B cell (primary cell): ENCODE measurements at regions of chr5 and their contacts with region 1.

Region 1: GRCh38 chr5:148740966-148741742 is 85.3 kb upstream of the ADRB2 start:
- DNase-seq: peak; percentile 72
- ATAC-seq: peak; percentile 28
- H3K4me3 ChIP-seq: no peak overlapping the region
- H3K4me3 Mint-ChIP-seq: no peak overlapping the region
- H3K27ac ChIP-seq: no peak overlapping the region
- H3K27ac Mint-ChIP-seq: no peak overlapping the region
- H3K4me1 ChIP-seq: peaks cover 0 to 3% of the 10 kb centered on the region in 2 donors
- H3K4me1 Mint-ChIP-seq: peaks cover 10% of the 10 kb centered on the region
- H3K27me3 ChIP-seq: no peaks in the 10 kb centered on the region
- H3K27me3 Mint-ChIP-seq: peaks cover 4% of the 10 kb centered on the region
- CTCF ChIP-seq: peak; percentile 87

Region 2: DNA sequence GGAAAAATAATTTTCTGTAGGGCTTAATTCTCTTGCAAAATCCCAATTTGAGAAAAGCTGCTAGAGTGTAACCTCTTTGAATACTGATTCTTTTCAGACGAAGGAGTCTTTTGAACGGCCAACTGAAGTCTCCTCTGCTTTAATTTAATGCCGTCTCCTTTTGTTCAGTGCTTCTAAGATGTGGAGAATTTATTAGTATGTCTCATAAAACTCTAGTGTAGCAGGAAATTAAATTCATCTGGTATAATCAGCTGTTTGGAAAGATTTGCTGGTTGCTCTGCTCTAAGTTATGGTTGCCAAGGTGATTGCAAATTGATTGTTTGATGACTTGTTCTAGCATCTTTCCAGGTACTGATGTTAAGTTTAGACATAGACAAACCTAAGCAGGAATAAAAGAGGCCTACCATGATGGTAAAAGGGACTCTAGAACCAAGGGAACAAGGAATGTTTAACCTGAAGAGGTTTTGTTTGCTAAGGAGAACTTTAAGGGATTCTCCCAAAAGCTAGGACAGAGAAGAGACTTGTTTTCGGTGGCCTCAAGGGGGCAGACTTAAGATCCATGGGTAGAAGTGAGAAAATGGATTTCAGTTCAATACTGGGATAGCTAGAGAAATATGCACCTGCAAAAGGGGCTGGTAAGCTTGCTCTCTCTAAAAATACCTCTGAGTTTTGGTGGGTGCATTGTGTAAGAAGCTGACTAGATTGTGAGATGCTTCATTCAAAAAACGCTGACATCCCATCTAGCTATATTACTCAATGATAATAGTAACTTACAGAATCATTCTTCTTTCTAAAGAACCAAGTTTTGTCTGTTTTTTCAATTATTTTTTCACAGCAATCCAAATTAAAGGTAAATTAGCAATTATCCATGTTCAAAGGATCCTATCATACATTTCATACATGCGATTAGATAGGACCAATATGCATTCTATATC is 79.6 kb after region 1 on chr5:
- CTCF ChIA-PET with region 1: interaction called, 17 read pairs
- POLR2A ChIA-PET with region 1: no interaction called
- intact Hi-C with region 1: loop called (anchors 5 kb)
- DNase-seq: peak; percentile 41
- ATAC-seq: no peak
- H3K4me3 ChIP-seq: no peak overlapping the region
- H3K4me3 Mint-ChIP-seq: no peak overlapping the region
- H3K27ac ChIP-seq: no peak overlapping the region
- H3K27ac Mint-ChIP-seq: no peak overlapping the region
- H3K4me1 ChIP-seq: peaks cover 33 to 35% of the 10 kb centered on the region in 2 donors
- H3K4me1 Mint-ChIP-seq: peaks cover 60% of the 10 kb centered on the region
- H3K27me3 ChIP-seq: no peaks in the 10 kb centered on the region
- H3K27me3 Mint-ChIP-seq: no peaks in the 10 kb centered on the region
- CTCF ChIP-seq: peak; percentile 67

Region 3: DNA sequence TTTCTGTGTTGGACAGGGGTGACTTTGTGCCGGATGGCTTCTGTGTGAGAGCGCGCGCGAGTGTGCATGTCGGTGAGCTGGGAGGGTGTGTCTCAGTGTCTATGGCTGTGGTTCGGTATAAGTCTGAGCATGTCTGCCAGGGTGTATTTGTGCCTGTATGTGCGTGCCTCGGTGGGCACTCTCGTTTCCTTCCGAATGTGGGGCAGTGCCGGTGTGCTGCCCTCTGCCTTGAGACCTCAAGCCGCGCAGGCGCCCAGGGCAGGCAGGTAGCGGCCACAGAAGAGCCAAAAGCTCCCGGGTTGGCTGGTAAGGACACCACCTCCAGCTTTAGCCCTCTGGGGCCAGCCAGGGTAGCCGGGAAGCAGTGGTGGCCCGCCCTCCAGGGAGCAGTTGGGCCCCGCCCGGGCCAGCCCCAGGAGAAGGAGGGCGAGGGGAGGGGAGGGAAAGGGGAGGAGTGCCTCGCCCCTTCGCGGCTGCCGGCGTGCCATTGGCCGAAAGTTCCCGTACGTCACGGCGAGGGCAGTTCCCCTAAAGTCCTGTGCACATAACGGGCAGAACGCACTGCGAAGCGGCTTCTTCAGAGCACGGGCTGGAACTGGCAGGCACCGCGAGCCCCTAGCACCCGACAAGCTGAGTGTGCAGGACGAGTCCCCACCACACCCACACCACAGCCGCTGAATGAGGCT is 85.0 kb after region 1 on chr5 and contains the start of gene ADRB2:
- CTCF ChIA-PET with region 1: interaction called, 54 read pairs
- POLR2A ChIA-PET with region 1: no interaction called
- intact Hi-C with region 1: loop called (anchors 5 kb)
- DNase-seq: peak; percentile 94
- ATAC-seq: peak; percentile 89
- H3K4me3 ChIP-seq: peak within 1 kb of the TSS; percentile 61 to 91 (median 86)
- H3K4me3 Mint-ChIP-seq: peak within 1 kb of the TSS; percentile 94
- H3K27ac ChIP-seq: peak within 1 kb of the TSS; percentile 76 to 91
- H3K27ac Mint-ChIP-seq: peak within 1 kb of the TSS; percentile 94
- H3K4me1 ChIP-seq: peaks cover 54 to 57% of the 10 kb centered on the region in 2 donors
- H3K4me1 Mint-ChIP-seq: peaks cover 74% of the 10 kb centered on the region
- H3K27me3 ChIP-seq: no peaks in the 10 kb centered on the region
- H3K27me3 Mint-ChIP-seq: no peaks in the 10 kb centered on the region
- CTCF ChIP-seq: no peak
- total RNA-seq, gene ADRB2: 11.4 and 12.4 TPM in 2 replicates

Region 4: DNA sequence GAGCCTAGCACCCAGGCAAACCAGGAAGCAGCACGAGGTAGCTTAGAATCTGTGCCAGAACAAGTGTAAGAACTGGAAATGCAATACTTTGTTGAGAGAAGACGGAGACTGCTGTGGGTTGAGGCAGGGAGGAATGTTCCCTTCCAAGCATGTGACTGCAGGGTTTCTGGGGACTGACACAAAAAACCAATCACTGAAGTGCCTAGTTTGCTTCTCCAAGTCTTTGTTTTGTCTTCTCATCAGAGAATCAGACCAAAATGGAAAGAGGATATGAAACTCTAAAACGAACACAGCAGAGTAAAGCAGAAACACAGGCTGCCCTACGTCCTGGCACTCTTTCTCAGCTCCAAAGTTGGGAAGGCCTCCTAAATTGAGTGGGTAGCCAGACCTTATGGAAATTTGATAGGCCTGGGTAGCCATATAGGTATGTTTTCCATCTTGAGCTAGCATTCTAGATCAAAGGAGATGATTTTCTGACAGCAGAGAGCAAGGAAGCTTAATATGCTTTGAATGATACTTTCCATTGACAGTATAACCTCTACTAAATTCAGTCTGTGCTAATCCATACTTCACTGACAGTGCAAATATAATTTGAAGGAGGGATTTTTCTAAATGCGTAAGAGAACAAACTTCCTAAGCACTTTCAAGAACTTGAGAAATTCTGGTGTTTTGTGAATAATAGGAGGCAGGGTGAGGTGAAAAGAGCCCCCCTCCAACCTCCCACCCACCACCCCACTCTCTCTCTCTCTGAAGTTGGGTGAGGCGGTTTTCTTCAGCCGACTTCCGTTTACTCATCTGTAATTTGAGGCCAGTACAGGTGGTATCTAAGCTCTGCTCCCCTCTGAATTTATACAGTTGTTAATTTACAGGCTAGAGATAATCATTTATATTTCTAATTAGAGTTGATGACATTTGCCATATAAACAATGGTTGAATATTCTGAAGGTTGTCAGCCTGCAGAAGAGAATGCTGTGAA is 90.7 kb after region 1 on chr5:
- CTCF ChIA-PET with region 1: interaction called, 54 read pairs
- POLR2A ChIA-PET with region 1: no interaction called
- intact Hi-C with region 1: loop called (anchors 5 kb)
- DNase-seq: peak; percentile 78
- ATAC-seq: peak; percentile 77
- H3K4me3 ChIP-seq: peak overlapping the region in 4 of 5 experiments; percentile 33 to 53 (median 45)
- H3K4me3 Mint-ChIP-seq: peak overlapping the region; percentile 94
- H3K27ac ChIP-seq: peak overlapping the region; percentile 77 to 78
- H3K27ac Mint-ChIP-seq: peak overlapping the region; percentile 98
- H3K4me1 ChIP-seq: peaks cover 97% of the 10 kb centered on the region in 2 donors
- H3K4me1 Mint-ChIP-seq: peaks cover 94% of the 10 kb centered on the region
- H3K27me3 ChIP-seq: no peaks in the 10 kb centered on the region
- H3K27me3 Mint-ChIP-seq: no peaks in the 10 kb centered on the region
- CTCF ChIP-seq: no peak

Region 5: GRCh38 chr5:148998174-148998797 is 257.1 kb after region 1 on chr5:
- CTCF ChIA-PET with region 1: interaction called, 172 read pairs
- POLR2A ChIA-PET with region 1: no interaction called
- intact Hi-C with region 1: loop called (anchors 1 kb)
- DNase-seq: peak; percentile 63
- ATAC-seq: peak; percentile 41
- H3K4me3 ChIP-seq: no peak overlapping the region
- H3K4me3 Mint-ChIP-seq: no peak overlapping the region
- H3K27ac ChIP-seq: no peak overlapping the region
- H3K27ac Mint-ChIP-seq: no peak overlapping the region
- H3K4me1 ChIP-seq: no peaks in the 10 kb centered on the region
- H3K4me1 Mint-ChIP-seq: no peaks in the 10 kb centered on the region
- H3K27me3 ChIP-seq: no peaks in the 10 kb centered on the region
- H3K27me3 Mint-ChIP-seq: peaks cover 31% of the 10 kb centered on the region
- CTCF ChIP-seq: peak; percentile 79

Region 6: GRCh38 chr5:149240354-149240998 is 499.3 kb after region 1 on chr5:
- CTCF ChIA-PET with region 1: no interaction called
- POLR2A ChIA-PET with region 1: no interaction called
- intact Hi-C with region 1: no loop called
- DNase-seq: peak; percentile 39
- ATAC-seq: no peak
- H3K4me3 ChIP-seq: no peak overlapping the region
- H3K4me3 Mint-ChIP-seq: peak overlapping the region; percentile 56
- H3K27ac ChIP-seq: no peak overlapping the region
- H3K27ac Mint-ChIP-seq: no peak overlapping the region
- H3K4me1 ChIP-seq: peaks cover 7 to 10% of the 10 kb centered on the region in 2 donors
- H3K4me1 Mint-ChIP-seq: peaks cover 10% of the 10 kb centered on the region
- H3K27me3 ChIP-seq: peaks cover 0 to 6% (median 0%) of the 10 kb centered on the region in 4 experiments
- H3K27me3 Mint-ChIP-seq: peaks cover 31% of the 10 kb centered on the region
- CTCF ChIP-seq: no peak